ENCODE measurements at regions of chr7 and their contacts with region 1.

Region 1: GRCh38 chr7:103317016-103317415 is 19.8 kb downstream of the PMPCB start:
- DNase-seq: no peak
- ATAC-seq: peak; percentile 32; the same call in 2 of the 3 replicates
- H3K4me3 ChIP-seq: no peak overlapping the region
- H3K27ac ChIP-seq: no peak overlapping the region
- H3K4me1 ChIP-seq: no peaks in the 10 kb centered on the region
- H3K27me3 ChIP-seq: no peaks in the 10 kb centered on the region
- CTCF ChIP-seq: no peak
- EP300 ChIP-seq: no peak
- POLR2A ChIP-seq: no peak; the same call in 1 of the 2 replicates
- RAD21 ChIP-seq: no peak

Region 2: DNA sequence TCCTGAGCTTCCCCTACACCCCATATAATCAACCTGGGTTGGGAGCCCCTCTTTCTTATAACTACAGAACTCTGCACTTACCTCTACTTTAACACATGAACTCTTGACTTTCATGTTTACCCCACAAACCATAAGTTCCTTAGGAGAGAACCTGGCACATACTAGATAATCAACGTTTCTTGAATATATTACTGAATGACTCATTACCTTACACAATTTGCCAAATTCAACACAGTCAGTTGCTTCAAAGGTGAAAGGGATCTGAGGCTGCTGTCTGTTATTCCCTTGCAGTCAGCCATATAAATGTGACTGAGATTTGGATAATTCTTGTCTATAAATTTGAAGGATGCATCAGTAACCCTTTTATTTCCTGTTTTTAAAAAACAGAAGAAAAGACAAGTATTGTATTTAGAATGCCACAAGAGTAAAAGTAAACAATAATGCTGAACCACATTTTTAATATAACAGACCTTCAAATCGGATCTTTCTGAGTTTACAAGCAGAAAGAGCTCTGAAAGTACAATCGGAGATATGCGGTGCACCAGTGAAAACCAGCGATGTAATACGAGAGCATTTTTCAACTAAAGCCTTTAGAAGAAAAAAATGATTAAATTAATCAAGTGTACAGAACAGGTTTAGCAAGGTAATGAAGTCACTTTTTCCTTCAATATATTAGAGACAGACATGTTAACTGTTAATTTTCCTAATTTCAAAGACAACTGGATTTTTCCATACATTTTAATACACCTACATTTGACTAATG is 433.7 kb before region 1 on chr7:
- CTCF ChIA-PET with region 1: no interaction called
- POLR2A ChIA-PET with region 1: no interaction called
- in situ Hi-C with region 1: no loop called
- intact Hi-C with region 1: no loop called
- DNase-seq: no peak
- ATAC-seq: no peak
- H3K4me3 ChIP-seq: no peak overlapping the region
- H3K27ac ChIP-seq: no peak overlapping the region
- H3K4me1 ChIP-seq: no peaks in the 10 kb centered on the region
- H3K27me3 ChIP-seq: no peaks in the 10 kb centered on the region
- CTCF ChIP-seq: no peak
- EP300 ChIP-seq: no peak
- POLR2A ChIP-seq: no peak
- RAD21 ChIP-seq: no peak

Region 3: DNA sequence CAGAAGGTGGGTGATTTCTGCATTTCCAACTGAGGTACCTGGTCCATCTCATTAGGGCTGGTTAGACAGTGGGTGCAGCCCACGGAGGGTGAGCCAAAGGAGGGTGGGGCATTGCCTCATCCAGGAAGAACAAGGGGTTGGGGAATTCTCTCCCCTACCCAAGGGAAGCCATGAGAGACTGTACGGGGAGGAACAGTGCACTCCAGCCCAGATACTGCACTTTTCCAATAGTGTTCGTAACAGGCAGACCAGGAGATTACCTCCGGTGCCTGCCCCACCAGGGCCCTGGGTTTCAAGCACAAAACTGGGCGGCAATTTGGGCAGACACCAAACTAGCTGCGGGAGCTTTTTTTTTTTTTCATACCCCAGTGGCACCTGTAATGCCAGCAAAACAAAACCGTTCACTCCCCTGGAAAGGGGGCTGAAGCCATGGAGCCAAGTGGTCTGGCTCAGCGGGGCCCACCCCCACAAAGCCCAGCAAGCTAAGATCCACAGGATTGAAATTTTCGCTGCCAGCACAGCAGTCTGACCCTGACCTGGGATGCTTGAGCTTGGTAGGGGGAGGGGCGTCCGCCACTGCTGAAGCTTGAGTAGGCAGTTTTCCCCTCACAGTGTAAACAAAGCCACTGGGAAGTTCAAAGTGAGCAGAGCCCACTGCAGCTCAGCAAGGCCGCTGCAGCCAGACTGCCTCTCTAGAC is 210.9 kb before region 1 on chr7:
- CTCF ChIA-PET with region 1: no interaction called
- POLR2A ChIA-PET with region 1: no interaction called
- in situ Hi-C with region 1: no loop called
- intact Hi-C with region 1: no loop called
- DNase-seq: peak in 1 of 4 experiments; percentile 19
- ATAC-seq: no peak; the same call in 2 of the 3 replicates
- H3K4me3 ChIP-seq: no peak overlapping the region
- H3K27ac ChIP-seq: no peak overlapping the region
- H3K4me1 ChIP-seq: no peaks in the 10 kb centered on the region; a peak in 1 of 5 replicates
- H3K27me3 ChIP-seq: no peaks in the 10 kb centered on the region
- CTCF ChIP-seq: no peak
- EP300 ChIP-seq: no peak
- POLR2A ChIP-seq: no peak
- RAD21 ChIP-seq: no peak

Region 4: GRCh38 chr7:103336761-103337160 is 19.7 kb after region 1 on chr7:
- CTCF ChIA-PET with region 1: no interaction called
- POLR2A ChIA-PET with region 1: interaction called, 12 read pairs
- in situ Hi-C with region 1: no loop called
- intact Hi-C with region 1: no loop called
- DNase-seq: no peak
- ATAC-seq: no peak
- H3K4me3 ChIP-seq: no peak overlapping the region
- H3K27ac ChIP-seq: no peak overlapping the region
- H3K4me1 ChIP-seq: peaks cover 0 to 3% of the 10 kb centered on the region in 2 experiments; a peak in 2 of 5 replicates
- H3K27me3 ChIP-seq: no peaks in the 10 kb centered on the region
- CTCF ChIP-seq: no peak
- EP300 ChIP-seq: no peak
- POLR2A ChIP-seq: no peak
- RAD21 ChIP-seq: no peak

Measured in K562 (cell line).